ENCODE measurements at regions of chr14 and their contacts with region 1.

Region 1: GRCh38 chr14:31937721-31938346 is 139.3 kb upstream of the ARHGAP5 start:
- DNase-seq: no peak
- ATAC-seq: peak; percentile 69

Region 2: DNA sequence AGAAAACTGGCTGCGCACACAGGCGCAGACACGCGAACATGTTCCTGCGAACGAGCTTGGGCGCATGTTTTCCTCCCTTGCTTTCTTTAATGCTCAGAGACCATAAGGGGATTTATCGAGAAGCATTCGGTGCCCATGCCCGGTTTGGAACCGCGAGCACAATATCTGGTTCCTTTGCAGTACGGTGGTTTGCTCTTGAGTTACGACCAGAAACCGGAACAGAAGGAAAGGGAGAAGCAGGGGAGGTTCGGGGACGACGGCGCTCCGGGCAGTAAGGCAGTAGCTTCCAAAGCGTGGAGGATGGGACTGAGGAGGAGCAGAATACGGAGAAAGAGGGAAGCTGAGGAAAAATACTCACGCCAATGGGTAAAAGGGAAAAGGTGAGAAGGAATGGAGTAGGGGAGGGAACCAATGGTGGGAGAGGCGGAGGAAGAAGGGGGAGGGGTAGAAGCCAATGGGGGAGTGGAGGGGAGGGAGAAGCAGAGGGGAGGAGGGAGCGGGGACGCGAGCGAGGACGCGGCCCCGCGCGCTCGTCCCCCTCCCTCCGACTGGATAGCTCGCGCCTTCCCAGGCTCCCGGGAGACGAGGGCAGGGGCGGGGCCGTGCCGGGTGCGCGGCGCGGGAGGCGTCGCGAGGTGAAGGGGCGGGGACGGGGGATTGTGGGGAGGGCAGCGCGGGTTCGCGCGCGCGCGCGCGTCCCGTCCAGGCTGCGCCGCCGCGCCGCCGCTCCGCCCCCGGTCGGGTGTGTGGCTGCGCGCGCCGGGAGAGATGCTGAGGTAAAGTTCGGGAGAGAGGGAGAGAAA is 138.6 kb after region 1 on chr14:
- intact Hi-C with region 1: loop called (anchors 10 kb)
- DNase-seq: peak; percentile 97
- ATAC-seq: peak; percentile 92

Region 3: DNA sequence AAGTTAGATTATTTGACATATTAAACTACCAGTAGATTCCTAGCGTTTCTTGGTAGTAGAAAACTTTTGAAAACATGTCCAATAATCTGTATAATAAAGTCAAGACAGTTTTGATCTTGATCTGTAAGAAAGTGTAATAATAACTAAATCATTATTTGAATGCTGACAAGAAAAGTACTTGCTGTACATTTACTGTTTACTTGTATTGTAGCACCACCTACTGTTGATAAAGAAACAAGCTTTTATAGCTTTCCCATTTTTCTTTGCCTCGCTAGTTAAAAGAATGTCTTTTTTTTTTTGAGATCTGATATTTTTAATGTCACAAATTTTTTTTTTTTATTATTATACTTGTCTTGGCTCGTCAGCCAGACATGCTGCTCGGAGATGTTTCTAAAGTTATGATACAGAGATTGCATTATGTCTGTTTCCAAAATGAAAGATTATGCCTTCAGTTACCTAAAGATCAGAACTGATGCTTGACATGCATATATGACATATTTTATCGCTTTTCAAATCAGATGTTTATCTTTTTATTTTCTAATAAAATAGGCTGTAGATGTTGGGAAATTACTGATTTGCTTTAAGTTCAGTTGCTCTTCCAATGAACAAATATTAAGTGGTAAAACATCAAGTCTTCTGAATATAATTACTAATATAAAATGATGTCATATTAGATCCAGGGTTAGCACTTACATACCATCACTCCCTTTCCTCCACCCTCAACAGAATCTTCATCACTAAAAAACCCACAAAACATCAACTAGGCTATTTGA is 531.7 kb after region 1 on chr14:
- intact Hi-C with region 1: loop called (anchors 10 kb)
- DNase-seq: no peak
- ATAC-seq: peak; percentile 58